ENCODE measurements at regions of chr15 and their contacts with region 1.

Region 1: DNA sequence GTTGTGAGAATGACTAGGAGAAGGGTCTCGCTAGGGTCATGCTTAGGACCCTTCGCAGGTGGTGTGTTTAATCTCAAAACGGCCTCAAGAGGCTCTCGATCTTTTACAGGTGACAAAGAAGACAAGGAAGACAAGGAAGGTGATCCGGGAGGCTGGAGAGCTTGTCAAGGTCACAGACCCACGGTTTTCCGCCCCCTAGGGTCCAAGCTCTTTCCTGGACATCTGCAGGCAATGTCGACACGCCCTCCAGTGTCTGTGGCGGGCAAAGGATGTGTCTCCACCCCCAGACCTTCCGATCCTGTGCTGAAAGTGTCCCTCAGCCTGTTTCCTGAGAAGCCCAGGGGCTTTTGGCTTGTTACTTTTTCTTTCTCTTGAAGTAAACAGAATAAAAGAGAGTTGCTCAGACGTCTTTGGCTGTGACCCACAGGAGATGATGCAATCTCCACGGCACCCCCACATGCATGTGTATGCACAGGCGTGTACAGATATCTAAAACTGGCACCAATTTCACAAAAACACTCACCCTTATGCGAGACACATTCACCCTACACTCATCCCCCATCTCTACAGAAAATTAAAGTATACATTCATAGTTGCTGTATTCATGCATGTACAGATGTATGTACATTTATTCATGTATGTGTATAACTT is 108.8 kb downstream of the KLF13 start:
- DNase-seq: peak; percentile 87
- H3K4me3 ChIP-seq: peak overlapping the region; percentile 14
- H3K27ac ChIP-seq: peak overlapping the region; percentile 69
- H3K4me1 ChIP-seq: peaks cover 6% of the 10 kb centered on the region
- H3K27me3 ChIP-seq: no peaks in the 10 kb centered on the region
- CTCF ChIP-seq: peak; percentile 61

Region 2: GRCh38 chr15:31215490-31216214 is 219.7 kb before region 1 on chr15:
- intact Hi-C with region 1: loop called (anchors 10 kb)
- DNase-seq: peak; percentile 90
- H3K4me3 ChIP-seq: peak overlapping the region; percentile 45
- H3K27ac ChIP-seq: peak overlapping the region; percentile 94
- H3K4me1 ChIP-seq: peaks cover 11% of the 10 kb centered on the region
- H3K27me3 ChIP-seq: no peaks in the 10 kb centered on the region
- CTCF ChIP-seq: peak; percentile 85

Region 3: DNA sequence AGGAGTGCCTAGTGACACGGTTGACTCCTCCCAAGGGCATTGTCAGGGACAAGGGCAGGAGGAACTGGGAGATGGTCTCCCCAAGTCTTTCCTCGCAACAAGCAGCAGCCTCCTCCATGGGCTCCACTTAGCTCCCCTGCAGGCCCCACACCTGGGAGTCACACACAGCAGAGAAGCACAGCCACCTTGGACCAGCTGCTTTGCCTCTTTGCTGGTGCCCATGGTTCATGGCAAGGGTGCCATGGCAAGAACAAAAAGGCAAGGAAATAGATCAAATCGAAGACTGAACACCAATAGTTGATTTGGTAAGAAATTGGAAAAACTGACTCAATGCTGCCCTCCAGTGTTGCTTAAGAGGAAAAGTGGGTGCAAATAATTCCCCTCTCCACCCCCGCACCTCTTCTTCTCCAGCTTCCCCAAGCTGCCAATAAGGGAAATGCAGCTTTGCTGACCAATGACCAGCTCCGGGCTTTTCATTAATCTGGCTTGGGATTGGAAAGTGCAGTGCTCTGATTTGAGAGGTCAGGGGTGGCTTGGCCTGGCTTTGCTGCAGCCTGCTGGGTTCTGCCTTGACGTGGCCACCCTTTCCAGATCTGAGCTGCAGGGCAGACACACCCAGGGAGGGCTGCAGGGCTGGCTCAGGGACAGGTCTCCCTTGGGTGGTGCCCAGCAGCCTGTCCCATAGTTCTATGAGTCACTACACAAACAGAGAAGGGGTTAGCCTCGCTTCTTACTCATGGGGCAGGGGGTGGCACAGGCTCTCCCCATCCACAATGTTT is 53.2 kb after region 1 on chr15:
- intact Hi-C with region 1: loop called (anchors 2 kb)
- DNase-seq: peak; percentile 81
- H3K4me3 ChIP-seq: no peak overlapping the region
- H3K27ac ChIP-seq: no peak overlapping the region
- H3K4me1 ChIP-seq: peaks cover 15% of the 10 kb centered on the region
- H3K27me3 ChIP-seq: no peaks in the 10 kb centered on the region
- CTCF ChIP-seq: peak; percentile 79

Measured in colonic mucosa (tissue), 4 donors.